GM10248 (cell line): ENCODE measurements at regions of chr3 and their contacts with region 1.

Region 1: GRCh38 chr3:185308126-185308754 is 54.4 kb upstream of the EHHADH start:
- DNase-seq: peak; percentile 54
- CTCF ChIP-seq: peak; percentile 60

Region 2: DNA sequence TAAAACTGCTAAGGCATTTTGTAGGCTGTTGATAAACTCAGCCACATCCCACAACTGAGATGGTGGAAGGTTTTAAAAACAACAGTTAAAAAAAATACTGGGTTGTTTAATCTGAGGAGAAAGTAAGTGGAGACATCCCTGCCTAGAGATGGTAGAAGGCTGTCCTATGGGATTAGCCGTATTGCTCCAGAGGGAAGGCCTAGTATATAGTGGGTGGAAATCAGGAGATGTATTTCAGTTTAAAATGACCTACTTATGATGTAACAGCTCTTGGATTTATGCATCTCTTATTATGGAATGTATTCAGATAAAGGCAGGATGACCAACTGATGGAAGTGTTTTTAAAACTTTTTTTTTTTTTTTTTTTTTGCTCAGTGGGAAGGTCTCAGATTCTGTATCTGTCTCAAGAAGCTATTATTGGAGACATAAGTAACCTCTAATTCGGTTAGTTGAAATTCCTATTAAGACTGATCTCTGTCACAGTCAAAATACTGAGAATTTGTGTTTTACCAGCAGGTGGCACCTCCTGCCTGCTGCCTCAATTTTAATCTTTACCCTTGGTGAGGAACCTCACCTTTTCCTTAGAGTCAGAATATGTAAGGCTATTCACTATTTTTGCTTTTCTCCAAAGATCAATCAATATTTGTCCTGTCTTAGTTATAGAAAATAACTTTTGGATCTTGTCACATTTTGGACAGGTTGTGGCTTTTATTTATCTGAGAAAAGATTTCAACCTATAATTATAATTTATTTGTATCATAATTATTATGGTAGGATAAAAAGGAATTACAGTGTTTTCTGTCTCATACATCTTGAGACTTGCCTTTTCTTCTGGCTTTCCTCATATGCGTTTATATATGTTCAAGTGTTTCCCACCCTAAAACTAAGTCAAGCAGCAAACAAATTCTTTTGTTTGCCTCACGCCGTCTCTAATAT is 433.3 kb before region 1 on chr3:
- CTCF ChIA-PET with region 1: interaction called, 10 read pairs
- POLR2A ChIA-PET with region 1: no interaction called
- DNase-seq: peak; percentile 28
- CTCF ChIP-seq: peak; percentile 58

Region 3: DNA sequence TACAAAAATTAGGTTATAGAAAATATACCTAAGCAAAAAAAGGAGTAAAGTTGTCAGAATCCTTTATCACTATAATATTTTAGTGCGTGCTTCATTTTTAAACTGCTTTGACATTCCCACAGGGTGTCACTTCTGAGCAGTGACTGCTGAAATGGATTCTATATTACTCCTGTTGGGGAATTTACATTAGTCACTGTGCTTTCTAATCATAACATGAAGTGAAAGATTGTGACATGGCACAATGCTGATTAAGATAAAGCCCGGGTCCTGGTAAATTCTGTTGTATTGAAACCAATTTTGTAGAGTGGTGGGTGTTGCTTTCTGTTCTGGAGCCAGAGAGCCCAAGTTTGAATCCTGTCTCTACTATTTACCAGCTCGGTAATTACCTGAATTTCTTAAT is 18.0 kb before region 1 on chr3:
- CTCF ChIA-PET with region 1: interaction called, 32 read pairs
- POLR2A ChIA-PET with region 1: no interaction called
- DNase-seq: peak; percentile 34
- CTCF ChIP-seq: no peak

Region 4: GRCh38 chr3:185297867-185298266 is 10.4 kb before region 1 on chr3:
- CTCF ChIA-PET with region 1: interaction called, 13 read pairs
- POLR2A ChIA-PET with region 1: no interaction called
- DNase-seq: no peak
- CTCF ChIP-seq: no peak

Region 5: DNA sequence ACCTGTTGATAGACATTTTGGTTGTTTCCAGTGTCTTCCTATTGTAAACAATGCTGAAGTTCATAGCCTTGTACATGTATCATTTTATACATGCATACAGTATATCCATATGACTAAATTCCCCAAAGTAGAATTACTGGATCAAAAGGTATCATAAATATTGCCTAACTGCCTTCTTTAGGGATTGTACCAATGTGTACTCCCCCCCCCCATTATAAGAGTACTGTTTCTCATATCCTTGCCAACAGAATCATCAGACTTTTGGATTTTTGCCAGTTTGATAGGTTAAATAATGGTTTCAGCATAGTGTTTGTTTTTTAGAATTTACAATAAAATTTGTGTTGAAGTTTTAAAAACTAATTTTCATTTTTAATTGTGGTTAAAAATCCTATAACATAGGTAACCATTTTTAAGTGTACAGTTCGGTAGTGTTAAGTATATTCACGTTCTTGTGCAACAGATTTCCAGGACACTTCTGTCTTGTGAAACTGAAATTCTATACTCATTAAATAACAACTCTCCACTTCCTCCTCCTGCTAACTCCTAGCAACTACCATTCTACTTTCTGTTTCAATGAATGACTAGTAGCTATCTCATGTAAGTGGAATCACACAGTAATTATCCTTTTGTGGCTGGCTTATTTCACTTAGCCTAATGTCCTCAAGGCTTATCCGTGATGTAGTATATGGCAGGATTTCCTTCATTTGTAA is 23.9 kb after region 1 on chr3:
- CTCF ChIA-PET with region 1: interaction called, 14 read pairs
- POLR2A ChIA-PET with region 1: no interaction called
- DNase-seq: peak; percentile 48
- CTCF ChIP-seq: no peak

Region 6: DNA sequence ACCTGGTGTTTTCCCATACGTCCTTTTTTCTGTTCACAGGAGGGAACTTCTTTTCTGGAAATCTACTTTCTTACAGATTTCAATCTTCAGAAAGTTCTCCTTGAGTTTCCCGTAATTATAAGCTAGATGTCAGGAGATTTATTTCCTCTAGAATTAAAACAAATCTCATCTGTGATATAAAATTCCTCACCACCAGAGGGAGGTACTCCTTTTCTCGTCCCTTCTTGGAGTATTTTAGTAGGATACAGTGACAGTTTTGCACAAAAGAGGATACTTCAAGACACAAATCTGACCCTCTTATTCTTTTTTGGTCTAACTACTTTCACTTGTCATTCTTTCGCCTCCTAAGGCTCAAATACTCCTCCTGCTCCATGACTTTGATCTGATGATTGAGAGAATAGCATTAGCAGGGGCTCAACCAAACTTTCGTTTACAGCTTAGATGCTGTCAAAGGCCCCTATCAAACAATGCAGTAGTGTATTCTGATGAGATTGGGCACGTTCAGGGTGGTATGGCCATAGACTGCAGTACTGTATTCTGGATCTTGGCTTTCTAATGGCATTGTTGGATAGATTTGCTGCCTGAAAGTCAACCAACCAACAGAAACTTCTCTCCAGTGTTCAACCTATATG is 152.6 kb after region 1 on chr3:
- CTCF ChIA-PET with region 1: no interaction called
- POLR2A ChIA-PET with region 1: no interaction called
- DNase-seq: peak; percentile 14
- CTCF ChIP-seq: peak; percentile 7

Region 7: DNA sequence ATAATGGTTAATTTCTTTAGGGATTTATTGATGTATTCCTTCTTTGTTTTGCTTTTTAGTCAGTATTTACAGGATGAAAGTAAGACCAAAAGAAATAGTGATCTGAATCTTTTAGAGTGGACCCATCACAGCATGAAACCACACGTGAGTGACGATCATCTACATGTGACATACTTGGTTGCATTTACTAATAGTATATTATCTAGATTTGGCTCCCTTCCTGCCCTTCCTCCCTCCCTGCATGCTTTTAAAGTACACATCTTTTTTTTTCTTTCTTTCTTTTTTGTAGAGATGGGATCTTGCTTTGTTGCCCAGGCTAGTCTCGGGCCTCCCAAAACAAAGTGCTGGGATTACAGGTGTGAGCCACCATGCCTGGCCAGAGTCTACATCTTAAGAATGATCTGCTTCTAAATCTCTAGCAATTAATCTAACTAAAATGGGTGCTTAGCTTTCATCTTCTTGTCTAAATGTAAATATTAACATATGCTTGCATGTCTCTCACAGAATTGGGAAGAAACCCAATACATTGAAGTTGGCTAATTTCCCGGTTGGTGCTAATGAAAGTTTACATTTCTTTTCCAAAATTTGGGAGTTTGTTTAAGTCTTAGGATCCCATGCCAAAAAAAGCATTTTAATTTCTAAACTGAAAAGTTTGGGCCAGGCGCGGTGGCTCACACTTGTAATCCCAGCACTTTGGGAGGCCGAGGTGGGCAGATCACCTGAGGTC is 315.9 kb after region 1 on chr3:
- CTCF ChIA-PET with region 1: no interaction called
- POLR2A ChIA-PET with region 1: no interaction called
- DNase-seq: no peak
- CTCF ChIP-seq: no peak